ENCODE measurements at regions of chr12 and their contacts with region 1.

Region 1: DNA sequence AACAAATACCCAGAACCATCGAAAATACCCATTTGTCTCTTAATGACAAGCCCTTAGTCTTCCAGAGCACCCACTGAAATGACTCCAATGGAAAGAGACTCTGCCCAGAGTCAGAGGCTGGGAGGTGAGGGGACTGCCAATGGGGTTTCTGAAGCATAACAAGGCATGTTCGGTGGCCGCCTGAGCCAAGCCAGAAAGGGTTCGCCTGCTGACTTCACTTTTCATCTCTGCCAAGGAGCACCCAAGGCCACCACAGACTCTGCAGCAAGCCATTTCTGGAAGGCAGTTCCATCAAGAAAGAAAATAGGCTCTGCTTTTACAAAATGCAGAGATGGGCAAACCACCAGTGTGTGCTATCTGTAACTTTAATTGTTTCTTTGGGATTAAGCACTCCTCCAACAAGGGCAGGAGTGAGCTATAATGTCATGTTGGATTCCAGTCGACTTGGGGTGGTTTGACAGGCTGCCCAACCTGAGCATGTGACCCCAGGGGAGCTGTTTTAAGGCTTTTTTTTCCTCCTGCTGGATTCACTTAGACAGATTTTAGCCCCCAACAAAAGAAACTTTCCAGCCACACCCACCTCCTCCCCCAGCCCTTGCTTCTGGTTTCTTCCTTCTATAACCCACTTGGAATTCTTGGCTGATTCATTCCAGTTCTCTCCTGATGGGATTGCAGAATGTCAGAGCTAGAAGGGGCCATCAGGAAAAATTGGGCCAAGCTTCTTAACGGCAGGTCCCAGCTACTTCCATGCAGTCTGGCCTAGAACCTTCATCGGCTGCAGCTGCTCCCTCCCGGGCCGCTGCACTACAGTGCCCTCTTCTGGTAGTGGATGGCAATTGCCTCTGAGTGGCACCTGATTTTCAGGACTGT is 24.1 kb downstream of the CKAP4 start:
- DNase-seq: peak; percentile 36
- ATAC-seq: peak; percentile 95
- H3K4me3 ChIP-seq: no peak overlapping the region
- H3K27ac ChIP-seq: no peak overlapping the region
- H3K4me1 ChIP-seq: no peaks in the 10 kb centered on the region
- H3K27me3 ChIP-seq: no peaks in the 10 kb centered on the region
- CTCF ChIP-seq: peak; percentile 78 to 95 (median 87)
- POLR2A ChIP-seq: no peak
- RAD21 ChIP-seq: peak; percentile 89

Region 2: DNA sequence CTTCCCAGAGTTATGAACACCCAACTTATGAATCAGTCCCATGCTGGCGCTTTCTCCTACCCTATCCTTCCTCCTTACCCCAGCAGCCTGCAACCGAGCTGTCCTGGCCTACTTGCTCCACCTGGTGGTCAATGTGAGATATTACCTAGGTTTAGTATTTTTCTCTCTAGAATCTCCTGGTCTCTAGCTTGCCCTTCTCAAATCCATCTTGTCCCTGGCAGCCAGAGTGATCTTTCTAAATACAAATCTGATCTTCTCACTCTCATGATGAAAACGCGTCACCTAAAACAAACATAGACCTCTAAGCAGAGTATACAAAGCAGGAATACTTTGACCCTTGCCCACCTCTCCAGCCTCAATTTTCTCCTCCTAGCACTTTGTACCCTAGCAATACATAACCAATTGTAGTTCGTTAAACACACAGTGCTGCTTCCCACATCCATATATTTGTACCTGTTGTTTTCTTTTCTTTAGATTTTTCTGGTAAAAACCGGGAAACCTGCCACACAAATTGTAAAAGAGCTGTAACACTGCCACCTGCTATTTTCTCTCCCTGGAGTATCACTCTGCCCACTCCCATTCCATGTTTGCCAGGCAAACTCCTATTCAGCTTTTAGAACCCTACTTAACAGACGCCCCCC is 58.9 kb after region 1 on chr12:
- CTCF ChIA-PET with region 1: interaction called, 38 read pairs
- POLR2A ChIA-PET with region 1: interaction called, 4 read pairs
- RAD21 ChIA-PET with region 1: interaction called, 7 to 10 read pairs
- intact Hi-C with region 1: loop called (anchors 1 kb)
- DNase-seq: peak; percentile 67
- ATAC-seq: peak; percentile 94
- H3K4me3 ChIP-seq: no peak overlapping the region
- H3K27ac ChIP-seq: no peak overlapping the region
- H3K4me1 ChIP-seq: peaks cover under 1 to 3% of the 10 kb centered on the region in 2 experiments; a peak in 3 of 4 replicates
- H3K27me3 ChIP-seq: no peaks in the 10 kb centered on the region
- CTCF ChIP-seq: peak; percentile 70 to 86 (median 83)
- POLR2A ChIP-seq: no peak
- RAD21 ChIP-seq: peak; percentile 89

Region 3: DNA sequence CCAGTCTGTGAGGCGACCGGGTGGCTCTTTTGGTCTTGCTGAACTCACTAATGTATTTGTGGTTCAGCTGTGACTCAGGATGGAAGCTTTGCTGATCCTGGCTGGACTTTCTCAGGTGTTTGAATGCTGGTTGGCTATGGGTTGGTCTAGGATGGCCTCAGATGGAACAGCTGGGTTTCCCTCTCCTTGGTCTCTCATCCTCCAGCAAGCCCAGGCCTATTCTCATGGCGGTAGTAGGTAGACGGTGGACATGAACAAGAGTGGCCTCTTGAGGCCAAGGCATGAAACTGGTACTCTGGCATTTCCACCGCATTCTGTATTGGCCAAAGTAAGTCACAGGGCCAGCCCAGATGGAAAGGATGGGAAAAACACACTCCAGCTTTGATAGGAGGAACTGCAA is 122.0 kb after region 1 on chr12:
- CTCF ChIA-PET with region 1: interaction called, 12 read pairs
- POLR2A ChIA-PET with region 1: no interaction called
- RAD21 ChIA-PET with region 1: no interaction called
- intact Hi-C with region 1: no loop called
- DNase-seq: peak; percentile 51
- ATAC-seq: peak; percentile 95
- H3K4me3 ChIP-seq: no peak overlapping the region
- H3K27ac ChIP-seq: no peak overlapping the region
- H3K4me1 ChIP-seq: peaks cover 10 to 12% of the 10 kb centered on the region in 2 experiments
- H3K27me3 ChIP-seq: 0 out of 2 replicates have a peak, but pooled peaks cover 1% of the 10 kb centered on the region
- CTCF ChIP-seq: peak; percentile 39 to 58 (median 54); a peak in 4 of 6 replicates
- POLR2A ChIP-seq: no peak
- RAD21 ChIP-seq: peak; percentile 72

Region 4: GRCh38 chr12:106357549-106358395 is 134.1 kb after region 1 on chr12 and contains the start of gene POLR3B:
- CTCF ChIA-PET with region 1: interaction called, 22 read pairs
- POLR2A ChIA-PET with region 1: interaction called, 3 read pairs
- RAD21 ChIA-PET with region 1: no interaction called
- intact Hi-C with region 1: loop called (anchors 2 kb)
- DNase-seq: peak; percentile 93
- ATAC-seq: peak; percentile 90
- H3K4me3 ChIP-seq: peak within 1 kb of the TSS; percentile 85 to 89
- H3K27ac ChIP-seq: peak within 1 kb of the TSS; percentile 70
- H3K4me1 ChIP-seq: peaks cover 3 to 11% of the 10 kb centered on the region in 2 experiments; a peak in 3 of 4 replicates
- H3K27me3 ChIP-seq: no peaks in the 10 kb centered on the region
- CTCF ChIP-seq: peak; percentile 78 to 90 (median 87)
- POLR2A ChIP-seq: peak; percentile 66
- RAD21 ChIP-seq: peak; percentile 87
- total RNA-seq, gene POLR3B: 10.7 TPM

Region 5: GRCh38 chr12:106841510-106842302 is 618.0 kb after region 1 on chr12:
- CTCF ChIA-PET with region 1: interaction called, 12 read pairs
- POLR2A ChIA-PET with region 1: no interaction called
- RAD21 ChIA-PET with region 1: no interaction called
- intact Hi-C with region 1: loop called (anchors 10 kb)
- DNase-seq: peak; percentile 31
- ATAC-seq: peak; percentile 82
- H3K4me3 ChIP-seq: no peak overlapping the region
- H3K27ac ChIP-seq: no peak overlapping the region
- H3K4me1 ChIP-seq: peaks cover 7 to 12% of the 10 kb centered on the region in 2 experiments
- H3K27me3 ChIP-seq: no peaks in the 10 kb centered on the region
- CTCF ChIP-seq: peak; percentile 64 to 81 (median 69); a peak in 5 of 6 replicates
- POLR2A ChIP-seq: no peak
- RAD21 ChIP-seq: peak; percentile 81

Region 6: GRCh38 chr12:106919910-106920544 is 696.3 kb after region 1 on chr12:
- CTCF ChIA-PET with region 1: interaction called, 6 read pairs
- POLR2A ChIA-PET with region 1: no interaction called
- RAD21 ChIA-PET with region 1: interaction called in 1 of 2 experiments, 3 read pairs
- intact Hi-C with region 1: loop called (anchors 5 kb)
- DNase-seq: peak; percentile 34
- ATAC-seq: peak; percentile 66
- H3K4me3 ChIP-seq: no peak overlapping the region
- H3K27ac ChIP-seq: no peak overlapping the region
- H3K4me1 ChIP-seq: no peaks in the 10 kb centered on the region
- H3K27me3 ChIP-seq: no peaks in the 10 kb centered on the region
- CTCF ChIP-seq: peak; percentile 65 to 85 (median 70); a peak in 5 of 6 replicates
- POLR2A ChIP-seq: no peak
- RAD21 ChIP-seq: peak; percentile 83